ENCODE measurements at regions of chr5 and their contacts with region 1.

Region 1: DNA sequence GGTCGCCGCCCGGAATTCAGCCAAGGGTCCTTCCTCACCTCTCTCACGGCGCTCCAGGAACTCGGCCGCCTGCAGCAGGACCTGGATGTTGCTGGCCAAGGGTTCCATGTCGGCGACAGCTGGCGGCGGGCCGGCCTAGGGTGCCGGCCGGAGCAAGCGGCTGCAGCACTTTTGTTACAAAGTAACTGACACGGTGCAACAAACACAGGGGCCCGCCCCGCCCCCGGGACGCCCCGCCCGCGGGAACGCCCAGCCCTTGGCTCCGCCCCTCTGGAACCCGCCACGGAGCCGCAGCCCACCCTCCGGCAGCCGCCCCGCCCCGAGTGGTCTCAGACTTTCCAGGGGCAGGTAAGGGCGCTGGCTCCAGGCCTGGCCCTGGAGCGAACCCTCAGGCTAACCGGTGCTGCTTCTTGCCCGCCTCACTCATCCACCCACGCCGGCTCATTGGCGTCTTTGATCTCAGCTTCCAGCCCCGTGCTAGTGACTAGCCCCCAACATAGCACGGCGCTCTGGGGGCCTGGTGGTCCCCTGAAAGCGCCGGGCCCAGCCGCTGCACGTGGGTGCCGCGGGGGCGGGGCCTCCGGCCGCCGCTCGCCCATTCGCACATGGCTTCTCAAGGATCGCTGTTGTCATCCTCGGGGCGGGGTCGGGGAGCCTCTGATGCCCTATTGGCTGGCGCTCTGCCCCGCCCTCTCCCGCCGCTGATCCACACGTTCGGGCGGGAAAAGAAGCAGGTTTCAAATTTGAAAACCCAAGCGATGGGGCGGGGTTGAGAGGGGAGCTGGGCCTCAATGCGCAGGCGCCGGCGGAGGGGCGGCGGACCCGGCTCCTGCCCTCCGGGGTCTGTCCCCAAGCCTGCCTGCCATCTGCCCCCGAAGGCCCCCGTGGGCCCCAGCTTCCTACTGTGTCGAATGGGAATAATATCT is at the start of gene MXD3:
- DNase-seq: peak; percentile 98
- CTCF ChIP-seq: no peak

Region 2: GRCh38 chr5:177300236-177300880 is 11.6 kb before region 1 on chr5:
- CTCF ChIA-PET with region 1: interaction called, 56 read pairs
- POLR2A ChIA-PET with region 1: interaction called, 3 read pairs
- DNase-seq: peak; percentile 58
- CTCF ChIP-seq: no peak

Region 3: DNA sequence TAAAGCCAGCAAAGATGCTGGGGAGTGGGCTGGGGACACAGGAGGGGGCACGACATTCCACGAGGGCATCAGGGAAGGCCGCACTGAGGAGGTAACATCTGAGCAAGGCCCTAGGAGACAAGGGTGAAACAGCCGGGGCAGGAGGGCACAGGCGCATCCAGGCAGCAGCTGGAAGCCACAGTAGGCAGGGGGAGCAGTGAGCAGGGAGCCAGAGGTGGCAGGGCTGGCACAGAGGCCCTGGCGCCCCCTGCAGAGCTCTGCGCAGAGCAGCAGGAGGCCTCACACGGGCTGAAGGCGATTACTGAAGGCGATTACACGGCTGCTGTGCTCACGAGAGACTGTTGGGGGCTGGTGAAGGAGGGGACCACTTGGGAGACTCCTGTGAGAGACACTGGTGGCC is 24.1 kb after region 1 on chr5:
- CTCF ChIA-PET with region 1: interaction called, 17 read pairs
- POLR2A ChIA-PET with region 1: no interaction called
- DNase-seq: no peak
- CTCF ChIP-seq: peak; percentile 31

Region 4: DNA sequence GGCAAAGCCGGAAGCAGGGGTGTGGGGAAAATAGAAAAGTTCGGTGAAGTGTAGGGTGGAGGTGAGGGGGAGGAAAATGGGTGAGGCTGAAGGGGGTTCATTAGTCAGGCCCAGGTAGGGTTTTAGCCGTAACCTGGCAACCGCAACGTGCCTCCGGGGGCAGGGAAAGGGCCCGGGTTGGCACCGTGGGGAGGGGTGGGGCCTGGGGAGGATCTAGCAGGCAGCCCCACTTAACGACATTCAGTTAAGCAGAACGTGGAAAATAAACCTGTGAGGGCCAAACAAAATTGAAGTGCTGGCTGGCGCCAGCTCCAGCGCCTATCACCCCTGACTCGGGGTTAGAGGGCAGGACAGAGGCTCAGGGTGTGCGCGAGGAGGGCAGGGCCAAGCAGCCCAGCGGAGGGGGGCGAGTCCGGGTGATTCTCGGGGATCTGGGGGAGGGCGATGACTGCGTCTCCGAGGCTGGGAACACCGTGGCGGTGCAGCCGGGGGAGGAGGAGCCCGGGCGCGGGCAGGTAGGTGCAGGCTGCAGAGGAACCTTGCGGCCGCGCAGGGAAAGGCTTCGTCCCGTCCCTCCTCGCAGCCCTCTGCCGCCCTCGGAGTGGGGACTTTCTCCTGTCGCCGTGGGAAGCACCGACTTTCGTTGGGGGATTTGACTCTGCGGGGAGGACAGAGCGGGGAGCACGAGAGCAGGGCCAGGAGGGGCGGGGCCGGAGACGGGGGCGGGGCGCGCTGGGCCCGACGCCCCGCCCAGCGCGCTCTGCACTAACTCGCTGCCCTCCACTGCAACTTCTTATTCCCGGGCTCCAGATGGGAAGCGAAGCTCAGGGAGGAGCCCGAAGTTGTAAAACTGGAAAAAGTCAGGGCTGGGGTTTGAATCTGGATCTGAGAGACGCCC is 50.9 kb after region 1 on chr5:
- CTCF ChIA-PET with region 1: interaction called, 17 read pairs
- POLR2A ChIA-PET with region 1: no interaction called
- DNase-seq: peak; percentile 86
- CTCF ChIP-seq: no peak

Region 5: DNA sequence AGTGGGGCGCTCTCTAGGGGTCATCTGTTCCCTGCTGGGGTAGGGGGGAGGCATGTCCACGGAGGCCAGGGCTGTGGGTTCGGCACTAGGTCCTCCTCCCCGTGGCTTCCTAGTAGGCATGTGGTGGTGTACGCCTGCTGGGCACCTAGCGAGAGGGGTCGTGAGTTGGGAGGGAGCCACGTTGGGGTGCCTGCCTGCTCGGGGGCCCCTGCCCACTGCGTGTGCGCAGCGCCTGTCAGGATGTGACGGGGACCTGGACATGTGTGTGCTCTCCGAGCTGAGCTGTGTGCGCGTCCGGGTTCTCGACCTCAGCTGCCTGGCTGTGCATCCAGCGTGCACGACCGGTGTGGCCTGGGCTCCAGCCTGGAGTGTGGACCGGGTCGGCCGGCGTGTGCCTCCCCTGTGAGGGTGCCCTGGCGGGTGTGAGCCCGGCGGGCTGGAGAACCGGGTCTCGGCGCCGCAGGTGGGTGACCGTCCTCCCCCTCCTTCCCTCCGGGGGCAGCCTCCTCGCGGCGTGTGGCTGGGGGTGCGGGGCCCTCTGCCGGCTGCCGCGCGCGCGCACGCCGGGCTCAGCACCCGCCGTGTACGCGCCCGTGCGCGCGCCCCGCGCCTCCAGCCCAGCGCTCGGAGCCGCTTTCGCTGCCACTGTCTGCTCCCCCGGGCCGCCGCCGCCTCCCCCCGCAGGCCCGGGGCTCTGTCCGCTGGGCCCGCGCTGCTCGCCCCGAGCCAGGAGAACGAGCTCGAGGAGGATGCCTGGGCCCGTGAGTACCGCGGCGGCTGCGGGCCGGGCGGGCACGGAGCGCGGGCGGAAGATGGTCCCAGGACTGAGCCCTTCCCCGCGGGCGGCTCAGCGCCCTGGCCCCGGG is 134.4 kb after region 1 on chr5 and contains the start of gene PRR7:
- CTCF ChIA-PET with region 1: interaction called, 64 read pairs
- POLR2A ChIA-PET with region 1: no interaction called
- DNase-seq: peak; percentile 86
- CTCF ChIP-seq: peak; percentile 21

Measured in GM10248 (cell line).